ENCODE measurements at regions of chr6 and their contacts with region 1.

Region 1: DNA sequence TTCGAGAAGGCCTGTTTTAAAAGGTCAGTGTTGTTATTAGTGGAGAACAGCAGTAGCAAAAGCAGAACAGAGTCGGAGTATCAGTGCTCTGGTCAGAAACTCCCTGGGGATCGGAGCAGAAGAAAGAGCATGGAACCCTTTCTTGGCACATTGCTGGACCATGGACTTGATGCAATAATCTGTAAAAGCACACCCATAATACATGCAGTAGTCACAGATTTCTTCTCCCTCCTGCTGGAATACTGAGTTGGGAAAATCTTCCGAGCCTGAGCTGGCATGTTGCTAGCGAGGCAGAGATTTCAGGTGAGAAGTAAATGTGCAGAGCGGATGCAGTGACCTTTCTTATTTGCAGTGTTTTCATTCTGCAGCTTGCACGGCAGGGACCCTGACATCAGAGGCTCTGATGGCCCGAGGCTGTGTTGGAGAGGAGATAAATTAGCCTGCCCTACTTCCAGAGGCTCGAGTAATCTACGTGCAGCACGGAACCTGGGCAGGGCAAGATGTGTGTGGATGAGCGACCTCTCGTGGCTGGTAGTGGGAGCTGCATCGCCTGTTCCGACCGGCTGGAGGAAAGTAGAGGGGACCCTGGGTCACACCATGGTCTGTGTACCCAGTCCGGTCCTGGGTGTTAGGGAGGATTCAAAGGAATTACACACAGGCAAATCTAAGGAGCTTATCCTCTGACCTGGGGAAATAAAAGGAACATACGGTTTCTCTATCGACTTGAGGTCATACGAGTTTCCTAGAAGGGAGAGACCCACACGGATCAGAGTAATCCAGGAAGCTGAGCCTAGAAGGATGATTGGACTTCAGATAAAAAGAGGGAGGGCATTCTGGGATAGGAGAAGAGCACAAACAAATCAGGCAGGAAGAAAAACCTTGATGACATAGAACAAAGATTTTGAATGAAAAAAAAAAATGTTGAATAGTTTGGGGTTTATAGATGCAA is 137.0 kb upstream of the STMND1 start:
- DNase-seq: peak; percentile 65
- H3K4me3 ChIP-seq: no peak overlapping the region
- H3K27ac ChIP-seq: no peak overlapping the region
- H3K4me1 ChIP-seq: no peaks in the 10 kb centered on the region
- H3K27me3 ChIP-seq: no peaks in the 10 kb centered on the region
- CTCF ChIP-seq: peak; percentile 85

Region 2: DNA sequence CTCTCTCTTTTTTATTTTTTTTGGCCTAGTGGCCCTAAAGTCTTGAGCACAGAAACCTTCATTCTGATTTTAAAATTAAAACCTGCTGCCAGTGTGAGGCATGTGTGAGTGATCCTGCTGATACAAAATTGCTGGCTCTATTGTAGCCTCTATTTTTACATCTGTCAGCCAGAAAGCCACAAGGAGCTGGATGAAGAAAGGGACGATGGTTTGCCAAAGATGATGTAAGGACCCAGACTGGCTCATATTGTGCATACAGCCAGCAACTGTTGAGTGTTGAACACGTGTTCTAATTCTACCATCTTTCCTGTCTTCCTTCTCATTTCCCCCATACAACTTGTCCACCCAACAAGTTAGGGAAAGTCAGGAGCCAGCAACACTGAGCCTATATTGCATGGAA is 162.8 kb before region 1 on chr6:
- intact Hi-C with region 1: no loop called
- DNase-seq: no peak
- H3K4me3 ChIP-seq: no peak overlapping the region
- H3K27ac ChIP-seq: no peak overlapping the region
- H3K4me1 ChIP-seq: no peaks in the 10 kb centered on the region
- H3K27me3 ChIP-seq: no peaks in the 10 kb centered on the region
- CTCF ChIP-seq: no peak

Region 3: GRCh38 chr6:17032988-17033634 is 68.3 kb after region 1 on chr6:
- intact Hi-C with region 1: no loop called
- DNase-seq: peak; percentile 68
- H3K4me3 ChIP-seq: no peak overlapping the region
- H3K27ac ChIP-seq: peak overlapping the region; percentile 41
- H3K4me1 ChIP-seq: no peaks in the 10 kb centered on the region
- H3K27me3 ChIP-seq: no peaks in the 10 kb centered on the region
- CTCF ChIP-seq: no peak

Region 4: GRCh38 chr6:17086469-17086868 is 121.6 kb after region 1 on chr6:
- intact Hi-C with region 1: loop called (anchors 10 kb)
- DNase-seq: peak; percentile 65
- H3K4me3 ChIP-seq: no peak overlapping the region
- H3K27ac ChIP-seq: no peak overlapping the region
- H3K4me1 ChIP-seq: no peaks in the 10 kb centered on the region
- H3K27me3 ChIP-seq: no peaks in the 10 kb centered on the region
- CTCF ChIP-seq: peak; percentile 66

Measured in colonic mucosa (tissue), 4 donors.